ENCODE measurements at regions of chr3 and their contacts with region 1.

Region 1: GRCh38 chr3:102536456-102536855 is 101.6 kb downstream of the ZPLD1 start:
- DNase-seq: no peak
- ATAC-seq: peak in 1 of 2 donors; percentile 58
- H3K4me3 ChIP-seq: no peak overlapping the region
- H3K27ac ChIP-seq: no peak overlapping the region
- H3K4me1 ChIP-seq: peaks cover 0 to 5% of the 10 kb centered on the region in 2 donors
- H3K27me3 ChIP-seq: peaks cover 0 to 3% (median 0%) of the 10 kb centered on the region in 3 donors
- CTCF ChIP-seq: peak in 3 of 5 experiments; percentile 13 to 37 (median 28)
- POLR2A ChIP-seq: no peak

Region 2: DNA sequence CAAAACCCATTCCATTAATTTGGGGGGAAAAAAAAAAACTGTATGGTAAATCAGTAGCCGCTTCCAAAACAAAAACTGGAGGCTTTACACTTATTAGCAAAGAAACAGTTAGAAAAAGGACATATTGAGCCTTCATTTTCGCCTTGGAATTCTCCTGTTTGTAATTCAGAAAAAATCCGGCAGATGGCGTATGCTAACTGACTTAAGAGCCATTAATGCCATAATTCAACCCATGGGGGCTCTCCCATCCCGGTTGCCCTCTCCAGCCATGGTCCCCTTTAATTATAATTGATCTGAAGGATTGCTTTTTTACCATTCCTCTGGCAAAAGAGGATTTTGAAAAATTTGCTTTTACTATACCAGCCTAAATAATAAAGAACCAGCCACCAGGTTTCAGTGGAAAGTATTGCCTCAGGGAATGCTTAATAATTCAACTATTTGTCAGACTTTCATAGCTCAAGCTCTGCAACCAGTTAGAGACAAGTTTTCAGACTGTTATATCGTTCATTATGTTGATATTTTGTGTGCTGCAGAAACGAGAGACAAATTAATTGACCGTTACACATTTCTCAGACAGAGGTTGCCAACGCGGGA is 840.6 kb before region 1 on chr3:
- in situ Hi-C with region 1: no loop called
- intact Hi-C with region 1: loop called (anchors 5 kb)
- DNase-seq: no peak
- ATAC-seq: no peak
- H3K4me3 ChIP-seq: no peak overlapping the region
- H3K27ac ChIP-seq: no peak overlapping the region
- H3K4me1 ChIP-seq: no peaks in the 10 kb centered on the region
- H3K27me3 ChIP-seq: no peaks in the 10 kb centered on the region
- CTCF ChIP-seq: peak; percentile 65 to 83 (median 67)
- POLR2A ChIP-seq: no peak

Region 3: GRCh38 chr3:101803173-101803782 is 733.2 kb before region 1 on chr3:
- in situ Hi-C with region 1: loop called (anchors 10 to 25 kb)
- intact Hi-C with region 1: no loop called
- DNase-seq: peak in 1 of 2 donors; percentile 35
- ATAC-seq: peak; percentile 96
- H3K4me3 ChIP-seq: no peak overlapping the region
- H3K27ac ChIP-seq: peak overlapping the region in 2 of 4 donors; percentile 8 to 42
- H3K4me1 ChIP-seq: peaks cover 0 to 31% of the 10 kb centered on the region in 2 donors
- H3K27me3 ChIP-seq: no peaks in the 10 kb centered on the region
- CTCF ChIP-seq: peak; percentile 67 to 86 (median 77)
- POLR2A ChIP-seq: no peak

Region 4: GRCh38 chr3:101809178-101810021 is 727.1 kb before region 1 on chr3:
- in situ Hi-C with region 1: loop called (anchors 10 to 25 kb)
- intact Hi-C with region 1: loop called (anchors 5 kb)
- DNase-seq: no peak
- ATAC-seq: peak; percentile 40 to 44
- H3K4me3 ChIP-seq: no peak overlapping the region
- H3K27ac ChIP-seq: peak overlapping the region in 1 of 4 donors; percentile 7
- H3K4me1 ChIP-seq: peaks cover 14 to 44% of the 10 kb centered on the region in 2 donors
- H3K27me3 ChIP-seq: no peaks in the 10 kb centered on the region
- CTCF ChIP-seq: peak; percentile 60 to 73 (median 61)
- POLR2A ChIP-seq: no peak

Region 5: GRCh38 chr3:102229062-102229655 is 307.3 kb before region 1 on chr3:
- in situ Hi-C with region 1: loop called (anchors 5 to 10 kb)
- intact Hi-C with region 1: loop called (anchors 1 kb)
- DNase-seq: peak; percentile 40 to 61
- ATAC-seq: peak; percentile 76 to 82
- H3K4me3 ChIP-seq: no peak overlapping the region
- H3K27ac ChIP-seq: no peak overlapping the region
- H3K4me1 ChIP-seq: no peaks in the 10 kb centered on the region
- H3K27me3 ChIP-seq: no peaks in the 10 kb centered on the region
- CTCF ChIP-seq: peak; percentile 72 to 93 (median 81)
- POLR2A ChIP-seq: no peak

Region 6: DNA sequence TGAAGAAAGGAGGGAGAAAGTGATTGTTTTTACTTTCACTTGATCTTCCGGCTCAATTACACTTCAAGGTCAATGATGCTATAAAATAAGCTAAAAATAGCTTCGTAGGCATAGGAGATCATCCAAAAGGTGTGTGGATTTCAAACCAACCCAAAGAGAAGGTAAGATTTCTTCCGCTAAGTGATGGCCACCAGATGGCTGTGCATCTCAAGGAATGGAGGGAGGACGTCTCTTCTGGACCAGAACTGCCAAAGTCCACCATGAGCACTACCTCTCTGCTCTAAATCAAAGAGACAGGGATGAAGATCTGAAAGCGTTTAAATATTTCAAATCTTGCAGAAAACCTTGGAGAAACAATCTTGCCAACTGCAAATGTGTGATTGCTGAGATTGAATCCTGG is 300.8 kb before region 1 on chr3:
- in situ Hi-C with region 1: loop called in 3 of 4 experiments (anchors 5 to 10 kb)
- intact Hi-C with region 1: no loop called
- DNase-seq: no peak
- ATAC-seq: no peak
- H3K4me3 ChIP-seq: no peak overlapping the region
- H3K27ac ChIP-seq: no peak overlapping the region
- H3K4me1 ChIP-seq: no peaks in the 10 kb centered on the region
- H3K27me3 ChIP-seq: no peaks in the 10 kb centered on the region
- CTCF ChIP-seq: no peak
- POLR2A ChIP-seq: no peak

Region 7: GRCh38 chr3:102673271-102674115 is 137.0 kb after region 1 on chr3:
- in situ Hi-C with region 1: no loop called
- intact Hi-C with region 1: no loop called
- DNase-seq: peak; percentile 2 to 15
- ATAC-seq: peak in 1 of 2 donors; percentile 71
- H3K4me3 ChIP-seq: peak overlapping the region in 2 of 4 donors; percentile 8 to 48
- H3K27ac ChIP-seq: no peak overlapping the region
- H3K4me1 ChIP-seq: no peaks in the 10 kb centered on the region
- H3K27me3 ChIP-seq: no peaks in the 10 kb centered on the region
- CTCF ChIP-seq: peak; percentile 36 to 79 (median 55)
- POLR2A ChIP-seq: no peak

Measured in gastrocnemius medialis (tissue), 4 donors.